ENCODE measurements at regions of chr6 and their contacts with region 1.

Region 1: DNA sequence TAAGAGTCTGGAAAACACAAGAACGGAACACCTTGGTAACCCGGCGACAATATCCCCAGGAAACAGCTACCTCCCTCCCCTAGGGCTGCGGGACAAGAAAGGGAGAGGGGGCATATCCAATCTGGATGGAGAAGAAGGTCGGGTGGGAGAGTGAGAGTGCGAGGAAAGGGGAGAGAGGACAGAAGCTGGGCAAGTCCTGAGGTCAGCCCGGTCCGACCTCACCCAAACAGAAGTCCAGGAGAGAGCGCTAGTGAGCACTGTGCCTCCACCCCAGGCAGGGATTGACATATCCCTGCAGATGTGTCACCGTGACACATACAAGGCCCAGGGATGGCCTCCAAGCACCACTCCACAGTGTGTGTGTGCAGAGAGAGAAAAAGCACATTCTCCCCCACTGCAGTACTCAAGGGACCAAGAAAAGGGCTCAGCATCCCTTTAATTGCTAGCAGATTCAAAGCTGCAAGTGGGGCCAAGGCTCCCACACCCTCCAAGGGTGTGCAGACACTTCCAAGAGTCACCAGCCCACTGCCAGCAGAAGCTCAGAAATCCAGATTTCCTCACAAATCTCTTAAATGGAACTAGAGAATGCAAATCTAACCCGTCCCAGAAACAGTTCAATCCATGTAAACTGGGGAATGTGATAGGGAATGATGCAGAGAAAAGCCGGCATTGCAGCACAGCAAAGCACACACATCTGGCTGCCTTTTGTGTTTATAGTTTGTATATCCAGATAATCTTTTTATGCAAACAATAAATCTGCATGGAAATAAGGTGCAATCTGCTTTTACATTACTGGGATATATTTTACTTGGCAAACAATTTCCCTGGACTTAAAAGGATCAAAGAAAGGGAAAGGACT is 3.1 kb downstream of the PXDC1 start:
- DNase-seq: peak; percentile 69
- H3K4me3 Mint-ChIP-seq: no peak overlapping the region
- H3K27ac Mint-ChIP-seq: no peak overlapping the region
- H3K4me1 Mint-ChIP-seq: peaks cover 6% of the 10 kb centered on the region
- H3K27me3 Mint-ChIP-seq: peaks cover 29% of the 10 kb centered on the region

Region 2: DNA sequence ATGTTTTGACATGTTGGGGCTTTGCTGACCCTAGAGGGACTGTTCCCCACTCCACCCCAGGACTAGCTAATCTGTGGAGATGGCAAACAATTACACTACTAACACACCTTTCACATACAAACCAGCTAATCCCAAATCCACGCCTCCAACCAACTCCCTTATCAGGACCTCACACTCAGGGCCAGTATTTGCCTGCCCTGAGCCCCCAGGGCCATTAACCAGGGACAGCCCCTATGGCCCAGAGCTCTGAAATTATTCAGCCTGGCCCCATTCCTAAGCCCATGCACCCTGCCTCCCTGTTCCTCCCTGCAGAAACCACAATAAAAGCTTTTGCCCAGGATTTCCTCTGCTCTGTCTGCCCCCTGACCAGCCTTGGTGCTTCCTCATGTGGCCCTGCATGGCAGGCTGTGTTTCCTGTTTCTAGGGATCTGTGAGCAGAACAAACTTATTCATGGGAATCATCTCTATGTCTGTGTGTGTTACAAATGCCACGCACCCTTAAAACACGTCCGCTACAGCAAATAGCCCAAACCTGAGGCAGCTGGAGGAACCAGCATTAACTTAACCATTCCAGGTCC is 118.1 kb before region 1 on chr6:
- CTCF ChIA-PET with region 1: no interaction called
- POLR2A ChIA-PET with region 1: no interaction called
- intact Hi-C with region 1: no loop called
- DNase-seq: no peak
- H3K4me3 Mint-ChIP-seq: no peak overlapping the region
- H3K27ac Mint-ChIP-seq: no peak overlapping the region
- H3K4me1 Mint-ChIP-seq: no peaks in the 10 kb centered on the region
- H3K27me3 Mint-ChIP-seq: peaks cover 24% of the 10 kb centered on the region

Region 3: GRCh38 chr6:3868544-3868943 is 120.1 kb after region 1 on chr6:
- CTCF ChIA-PET with region 1: no interaction called
- POLR2A ChIA-PET with region 1: no interaction called
- intact Hi-C with region 1: loop called (anchors 5 kb)
- DNase-seq: no peak
- H3K4me3 Mint-ChIP-seq: peak overlapping the region; percentile 24
- H3K27ac Mint-ChIP-seq: peak overlapping the region; percentile 92
- H3K4me1 Mint-ChIP-seq: peaks cover 45% of the 10 kb centered on the region
- H3K27me3 Mint-ChIP-seq: peaks cover 8% of the 10 kb centered on the region

Region 4: DNA sequence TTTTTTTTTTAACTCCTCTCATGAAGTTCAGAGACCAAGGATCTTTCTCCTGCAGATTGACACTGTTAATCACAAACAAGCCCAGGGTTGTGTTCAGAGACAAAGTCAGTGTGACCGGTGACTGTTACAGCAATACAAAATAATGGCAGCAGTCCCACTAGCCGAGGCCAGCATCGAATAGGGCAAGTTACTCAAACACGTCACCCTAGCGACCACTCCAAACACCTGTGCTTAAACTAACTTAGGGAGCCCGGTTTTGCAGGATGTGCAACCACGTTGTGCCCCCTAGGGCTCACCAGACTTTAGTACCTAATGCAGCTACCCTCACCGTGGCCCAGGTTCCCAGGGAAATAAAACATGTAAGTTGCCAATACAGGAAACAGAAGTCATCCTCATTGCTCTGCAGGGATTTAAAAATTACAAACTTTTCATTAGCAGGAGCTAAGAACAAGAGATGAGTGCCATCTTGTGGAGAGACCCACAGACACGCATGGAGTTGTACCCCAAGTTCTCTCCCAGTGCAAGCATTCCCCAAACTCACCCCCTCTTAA is 138.8 kb after region 1 on chr6:
- CTCF ChIA-PET with region 1: interaction called, 26 read pairs
- POLR2A ChIA-PET with region 1: no interaction called
- intact Hi-C with region 1: loop called (anchors 1 kb)
- DNase-seq: peak; percentile 20
- H3K4me3 Mint-ChIP-seq: no peak overlapping the region
- H3K27ac Mint-ChIP-seq: no peak overlapping the region
- H3K4me1 Mint-ChIP-seq: no peaks in the 10 kb centered on the region
- H3K27me3 Mint-ChIP-seq: peaks cover 1% of the 10 kb centered on the region

Region 5: DNA sequence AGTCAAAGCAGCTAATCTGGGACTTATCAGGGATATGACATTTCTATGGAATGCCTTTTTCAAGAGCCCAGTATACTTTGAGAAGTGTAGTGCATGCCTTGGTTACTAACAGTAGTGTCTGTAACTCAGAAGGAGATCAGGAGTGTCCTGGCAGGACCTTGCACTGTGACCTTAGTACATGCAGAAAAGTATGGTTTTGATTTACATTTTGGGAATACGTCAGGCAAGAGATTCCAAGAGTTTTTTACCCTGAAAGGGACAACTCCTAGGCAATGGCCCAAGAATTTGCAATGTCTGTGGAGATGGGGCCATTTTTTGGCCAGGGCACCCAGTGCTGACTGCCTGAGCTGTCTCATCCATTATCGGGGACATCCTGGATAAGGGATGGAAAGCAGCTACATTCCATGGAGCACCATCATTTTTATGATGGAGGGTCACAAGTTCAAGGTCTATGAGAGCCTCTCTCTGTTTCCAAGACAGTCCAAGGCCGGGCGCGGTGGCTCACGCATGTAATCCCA is 180.9 kb after region 1 on chr6:
- CTCF ChIA-PET with region 1: interaction called, 56 read pairs
- POLR2A ChIA-PET with region 1: no interaction called
- intact Hi-C with region 1: no loop called
- DNase-seq: no peak
- H3K4me3 Mint-ChIP-seq: no peak overlapping the region
- H3K27ac Mint-ChIP-seq: no peak overlapping the region
- H3K4me1 Mint-ChIP-seq: no peaks in the 10 kb centered on the region
- H3K27me3 Mint-ChIP-seq: no peaks in the 10 kb centered on the region

Region 6: DNA sequence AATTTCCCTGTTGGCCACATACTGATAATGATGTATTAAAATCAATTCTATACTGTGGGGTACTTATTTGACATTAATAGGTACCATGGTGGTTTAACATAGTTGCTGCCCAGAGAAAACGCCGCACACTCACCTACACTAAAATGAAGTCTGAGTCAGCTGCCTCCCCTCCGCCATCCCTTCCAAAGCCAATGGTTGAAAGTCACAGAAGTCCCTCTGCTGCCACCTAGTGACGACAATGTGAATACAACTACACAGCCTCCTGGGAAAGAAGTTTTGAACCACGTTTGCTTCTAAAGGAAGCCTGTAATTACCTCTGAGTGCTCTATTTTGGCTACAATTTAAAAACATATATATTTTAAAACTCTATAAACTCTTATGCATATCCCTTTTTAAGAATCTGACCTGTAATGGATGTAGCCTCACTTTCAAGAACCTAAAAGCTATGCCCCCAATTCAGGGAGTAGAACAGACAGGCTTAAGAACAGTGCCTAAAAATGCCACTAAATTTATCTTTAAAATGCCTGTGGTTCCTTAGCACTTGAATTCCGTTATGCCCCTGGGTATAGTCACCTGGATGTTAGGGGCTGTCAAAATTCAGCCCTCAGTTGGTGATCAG is 407.5 kb after region 1 on chr6:
- CTCF ChIA-PET with region 1: interaction called, 5 read pairs
- POLR2A ChIA-PET with region 1: no interaction called
- intact Hi-C with region 1: loop called (anchors 2 kb)
- DNase-seq: peak; percentile 86
- H3K4me3 Mint-ChIP-seq: no peak overlapping the region
- H3K27ac Mint-ChIP-seq: no peak overlapping the region
- H3K4me1 Mint-ChIP-seq: peaks cover 4% of the 10 kb centered on the region
- H3K27me3 Mint-ChIP-seq: peaks cover 9% of the 10 kb centered on the region